ENCODE measurements at regions of chr12 and their contacts with region 1.

Region 1: GRCh38 chr12:110468212-110469048 is at the starts of genes FAM216A and GPN3:
- DNase-seq: peak; percentile 86
- ATAC-seq: peak; percentile 91
- H3K4me3 Mint-ChIP-seq: peak within 1 kb of the TSS; percentile 100
- H3K27ac Mint-ChIP-seq: peak within 1 kb of the TSS; percentile 96
- H3K4me1 Mint-ChIP-seq: peaks cover 41% of the 10 kb centered on the region
- H3K27me3 Mint-ChIP-seq: no peaks in the 10 kb centered on the region
- CTCF ChIP-seq: no peak
- total RNA-seq, gene FAM216A: 9.7 and 9.9 TPM in 2 replicates
- total RNA-seq, gene GPN3: 17.0 and 19.0 TPM in 2 replicates

Region 2: DNA sequence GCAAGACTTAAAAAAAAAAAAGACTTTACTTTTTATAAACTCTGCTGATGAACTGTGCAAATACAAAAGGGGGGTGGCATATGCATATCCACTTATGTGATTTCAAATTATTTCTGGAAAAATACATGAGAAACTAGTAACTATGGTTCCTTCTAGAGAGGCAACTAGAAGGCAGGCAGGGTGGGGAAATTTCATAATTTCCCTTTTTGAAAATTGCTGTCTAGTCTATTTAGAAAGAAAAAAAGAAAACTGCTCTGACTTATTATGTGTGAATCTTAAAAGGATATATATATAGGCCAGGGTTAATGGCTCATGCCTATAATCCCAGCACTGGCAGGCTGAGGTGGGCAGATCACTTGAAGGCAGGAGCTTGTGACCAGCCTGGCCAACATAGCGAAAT is 107.2 kb before region 1 on chr12:
- CTCF ChIA-PET with region 1: no interaction called
- POLR2A ChIA-PET with region 1: no interaction called
- intact Hi-C with region 1: no loop called
- DNase-seq: no peak
- ATAC-seq: no peak
- H3K4me3 Mint-ChIP-seq: no peak overlapping the region
- H3K27ac Mint-ChIP-seq: no peak overlapping the region
- H3K4me1 Mint-ChIP-seq: no peaks in the 10 kb centered on the region
- H3K27me3 Mint-ChIP-seq: no peaks in the 10 kb centered on the region
- CTCF ChIP-seq: no peak

Region 3: GRCh38 chr12:110431957-110432587 is 36.4 kb before region 1 on chr12:
- CTCF ChIA-PET with region 1: interaction called, 11 read pairs
- POLR2A ChIA-PET with region 1: interaction called, 12 read pairs
- intact Hi-C with region 1: loop called (anchors 1 kb)
- DNase-seq: no peak
- ATAC-seq: no peak
- H3K4me3 Mint-ChIP-seq: no peak overlapping the region
- H3K27ac Mint-ChIP-seq: no peak overlapping the region
- H3K4me1 Mint-ChIP-seq: peaks cover 2% of the 10 kb centered on the region
- H3K27me3 Mint-ChIP-seq: no peaks in the 10 kb centered on the region
- CTCF ChIP-seq: no peak

Region 4: GRCh38 chr12:110563702-110564640 is 95.5 kb after region 1 on chr12:
- CTCF ChIA-PET with region 1: interaction called, 4 read pairs
- POLR2A ChIA-PET with region 1: interaction called, 15 read pairs
- intact Hi-C with region 1: no loop called
- DNase-seq: no peak
- ATAC-seq: no peak
- H3K4me3 Mint-ChIP-seq: peak overlapping the region; percentile 55
- H3K27ac Mint-ChIP-seq: peak overlapping the region; percentile 92
- H3K4me1 Mint-ChIP-seq: peaks cover 87% of the 10 kb centered on the region
- H3K27me3 Mint-ChIP-seq: no peaks in the 10 kb centered on the region
- CTCF ChIP-seq: no peak

Region 5: DNA sequence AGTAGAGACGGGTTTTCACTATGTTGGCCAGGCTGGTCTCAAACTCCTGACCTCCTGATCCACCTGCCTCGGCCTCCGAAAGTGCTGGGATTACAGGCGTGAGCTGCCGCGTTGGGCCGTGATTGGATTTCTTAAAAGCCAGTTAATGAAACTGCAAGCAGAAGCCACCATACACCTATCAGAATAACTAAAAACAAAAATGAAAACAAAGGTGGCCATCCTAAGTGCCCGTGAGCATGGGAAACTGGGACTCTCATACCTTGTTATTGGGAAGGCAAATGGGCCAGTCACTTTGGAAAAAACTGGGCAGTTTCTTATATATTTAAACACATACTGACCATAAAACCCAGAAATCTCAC is 137.8 kb after region 1 on chr12:
- CTCF ChIA-PET with region 1: interaction called, 52 read pairs
- POLR2A ChIA-PET with region 1: interaction called, 23 read pairs
- intact Hi-C with region 1: loop called (anchors 1 kb)
- DNase-seq: no peak
- ATAC-seq: no peak
- H3K4me3 Mint-ChIP-seq: peak overlapping the region; percentile 85
- H3K27ac Mint-ChIP-seq: peak overlapping the region; percentile 94
- H3K4me1 Mint-ChIP-seq: peaks cover 84% of the 10 kb centered on the region
- H3K27me3 Mint-ChIP-seq: no peaks in the 10 kb centered on the region
- CTCF ChIP-seq: no peak

Region 6: DNA sequence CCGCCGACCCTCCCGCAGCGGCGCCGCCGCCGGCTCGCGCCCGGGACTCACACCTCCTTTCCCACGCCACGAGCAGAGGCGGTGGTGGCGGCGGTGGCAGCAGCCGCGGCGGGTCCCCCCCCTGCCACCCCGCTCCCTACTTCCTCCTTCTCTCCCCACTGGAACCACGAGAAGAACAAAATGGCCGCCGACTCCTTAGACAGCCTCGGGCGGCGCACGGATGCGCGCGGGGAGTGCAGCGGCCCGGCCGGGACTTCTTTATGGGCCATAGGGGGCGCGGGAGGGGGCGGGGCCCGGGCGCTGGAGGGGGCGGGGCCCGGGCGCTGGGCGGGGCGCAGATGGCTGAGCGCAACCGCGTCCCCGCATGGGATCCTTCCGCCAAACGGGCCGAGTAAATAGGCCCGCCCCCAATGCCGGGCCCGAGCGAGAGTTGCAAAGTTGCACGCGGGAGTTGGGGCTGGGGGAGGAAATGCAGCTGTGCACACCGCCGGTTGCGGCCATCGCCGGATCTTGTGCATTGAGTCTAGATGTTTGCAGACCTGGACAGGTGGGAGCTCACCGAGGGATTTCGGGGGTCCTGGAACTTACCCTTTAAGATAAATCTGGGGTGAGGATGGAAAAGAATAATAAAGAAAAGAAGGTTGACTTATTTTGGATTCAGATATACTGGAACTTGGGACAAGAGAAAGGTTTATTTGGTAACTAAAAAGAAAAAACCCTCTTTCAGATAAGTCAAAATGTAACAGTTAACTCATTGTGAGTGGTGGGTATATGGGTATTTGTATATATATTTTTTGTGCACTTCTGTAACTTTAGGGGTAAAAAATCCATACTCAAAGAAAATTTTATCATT is 274.5 kb after region 1 on chr12 and contains the start of gene PPP1CC:
- CTCF ChIA-PET with region 1: no interaction called
- POLR2A ChIA-PET with region 1: interaction called, 8 read pairs
- intact Hi-C with region 1: loop called (anchors 5 kb)
- DNase-seq: peak; percentile 82
- ATAC-seq: peak; percentile 94
- H3K4me3 Mint-ChIP-seq: peak within 1 kb of the TSS; percentile 98
- H3K27ac Mint-ChIP-seq: peak within 1 kb of the TSS; percentile 93
- H3K4me1 Mint-ChIP-seq: peaks cover 44% of the 10 kb centered on the region
- H3K27me3 Mint-ChIP-seq: no peaks in the 10 kb centered on the region
- CTCF ChIP-seq: no peak
- total RNA-seq, gene PPP1CC: 148 and 152 TPM in 2 replicates

Region 7: GRCh38 chr12:110913119-110914056 is 445.0 kb after region 1 on chr12:
- CTCF ChIA-PET with region 1: no interaction called
- POLR2A ChIA-PET with region 1: no interaction called
- intact Hi-C with region 1: loop called (anchors 1 kb)
- DNase-seq: peak; percentile 21
- ATAC-seq: peak; percentile 98
- H3K4me3 Mint-ChIP-seq: peak overlapping the region; percentile 51
- H3K27ac Mint-ChIP-seq: peak overlapping the region; percentile 90
- H3K4me1 Mint-ChIP-seq: peaks cover 35% of the 10 kb centered on the region
- H3K27me3 Mint-ChIP-seq: no peaks in the 10 kb centered on the region
- CTCF ChIP-seq: no peak

Measured in activated B cell treated with CpG ODN at 0.5 μM for 24 hours (primary cell).